SK-N-SH (cell line): ENCODE measurements at regions of chr22 and their contacts with region 1.

Region 1: DNA sequence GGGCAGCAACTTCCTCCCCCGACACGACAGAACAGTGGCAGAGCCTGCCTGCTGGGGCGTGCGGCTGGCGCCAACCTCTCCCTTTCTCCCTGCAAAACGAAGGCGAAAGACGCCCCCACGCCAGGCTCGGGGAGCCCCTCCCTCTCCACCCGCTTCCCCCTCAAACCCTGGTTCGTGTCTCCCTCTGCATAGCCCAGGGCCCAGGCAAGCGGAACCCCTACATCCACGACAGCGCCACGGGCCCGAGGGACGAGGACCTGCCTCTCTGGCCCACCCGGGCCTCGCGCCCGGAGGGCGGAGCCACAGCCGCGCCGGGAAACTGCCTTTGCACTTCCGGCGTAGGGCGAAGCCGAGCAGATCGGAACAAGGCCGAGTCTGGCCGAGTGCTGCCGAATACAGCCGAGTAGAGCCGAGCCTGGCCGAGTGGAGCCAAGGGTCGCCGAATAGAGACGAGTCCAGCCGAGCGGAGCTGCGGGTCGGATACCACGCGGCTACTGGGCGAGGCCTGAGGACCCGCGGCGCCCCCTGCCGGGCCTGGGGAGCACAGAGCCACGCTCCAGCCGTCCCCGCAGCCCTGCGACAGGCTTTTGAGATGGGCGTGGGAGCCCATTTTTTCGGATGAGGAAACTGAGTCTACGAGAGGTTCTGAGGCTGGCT is 11.2 kb upstream of the C1QTNF6 start:
- DNase-seq: peak; percentile 97
- H3K4me3 ChIP-seq: peak overlapping the region; percentile 72 to 76
- H3K27ac ChIP-seq: peak overlapping the region; percentile 73 to 96
- H3K4me1 ChIP-seq: peaks cover 19 to 28% of the 10 kb centered on the region in 2 experiments
- H3K27me3 ChIP-seq: no peaks in the 10 kb centered on the region
- CTCF ChIP-seq: peak; percentile 82
- EP300 ChIP-seq: no peak
- RAD21 ChIP-seq: peak; percentile 76

Region 2: DNA sequence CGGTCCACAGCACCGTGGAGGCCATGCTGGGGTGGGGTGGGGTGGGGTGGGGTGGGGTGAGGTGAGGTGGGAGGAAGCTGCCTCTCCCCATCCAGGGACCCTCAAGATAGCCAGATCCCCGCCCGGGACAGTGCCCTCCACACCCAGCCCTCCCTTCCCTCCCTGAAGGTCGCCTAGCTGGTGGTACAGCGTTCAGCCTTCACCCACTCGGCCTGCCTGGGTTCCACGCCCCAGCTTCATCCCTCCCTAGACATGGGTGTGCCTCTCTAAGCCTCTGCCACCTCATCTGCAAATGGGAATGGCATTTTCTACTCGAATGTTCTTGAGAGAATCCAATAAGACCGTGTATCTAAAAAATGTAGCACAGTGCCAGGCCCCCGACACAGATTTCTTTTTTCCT is 129.9 kb before region 1 on chr22:
- CTCF ChIA-PET with region 1: interaction called, 13 read pairs
- POLR2A ChIA-PET with region 1: no interaction called
- DNase-seq: no peak
- H3K4me3 ChIP-seq: no peak overlapping the region
- H3K27ac ChIP-seq: no peak overlapping the region
- H3K4me1 ChIP-seq: no peaks in the 10 kb centered on the region; a peak in 1 of 4 replicates
- H3K27me3 ChIP-seq: peaks cover 23% of the 10 kb centered on the region; the same call in 1 of the 2 replicates
- CTCF ChIP-seq: no peak
- EP300 ChIP-seq: no peak
- RAD21 ChIP-seq: no peak

Region 3: GRCh38 chr22:37145180-37146050 is 53.8 kb before region 1 on chr22:
- CTCF ChIA-PET with region 1: interaction called, 10 read pairs
- POLR2A ChIA-PET with region 1: no interaction called
- DNase-seq: no peak
- H3K4me3 ChIP-seq: no peak overlapping the region
- H3K27ac ChIP-seq: no peak overlapping the region
- H3K4me1 ChIP-seq: no peaks in the 10 kb centered on the region
- H3K27me3 ChIP-seq: no peaks in the 10 kb centered on the region
- CTCF ChIP-seq: no peak
- EP300 ChIP-seq: no peak
- RAD21 ChIP-seq: no peak

Region 4: DNA sequence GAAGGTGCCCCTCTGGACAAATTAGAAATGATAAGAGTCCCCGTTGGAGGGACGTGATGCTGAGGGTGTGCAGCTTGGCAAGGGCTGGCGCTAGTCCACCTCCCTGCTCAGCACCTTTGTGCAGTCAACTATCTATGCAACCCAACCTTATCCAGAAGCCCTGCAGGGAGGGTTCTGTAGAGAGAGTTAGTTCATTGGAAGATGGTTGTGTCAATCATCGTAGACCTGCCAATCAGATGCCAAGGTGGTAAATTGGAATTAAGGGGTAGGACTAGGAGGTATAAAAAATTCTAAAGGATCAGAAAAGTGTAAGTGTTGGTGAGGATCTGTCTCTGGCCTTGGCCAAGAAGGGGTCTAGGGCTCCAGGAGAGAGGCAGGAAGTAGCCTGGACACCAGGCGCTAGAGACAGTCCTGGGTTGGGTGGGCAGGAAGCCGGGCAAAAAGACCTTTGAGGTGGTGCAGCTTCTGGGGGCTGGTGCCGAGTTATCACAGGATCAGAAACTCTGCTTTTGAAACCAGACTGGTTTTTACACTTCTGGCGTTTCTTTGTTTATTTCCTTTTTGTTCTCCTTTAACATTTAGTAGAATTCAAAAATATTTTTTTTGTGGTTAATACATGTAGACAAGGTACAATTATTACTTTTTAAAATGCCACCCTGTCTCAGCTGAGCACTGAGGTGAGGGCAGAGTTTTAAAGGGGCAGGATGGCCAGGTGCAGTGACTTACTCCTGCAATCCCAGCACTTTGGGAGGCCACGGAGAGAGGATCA is 12.8 kb before region 1 on chr22:
- CTCF ChIA-PET with region 1: interaction called, 190 read pairs
- POLR2A ChIA-PET with region 1: interaction called, 4 read pairs
- DNase-seq: peak; percentile 85
- H3K4me3 ChIP-seq: peak overlapping the region; percentile 55 to 74
- H3K27ac ChIP-seq: peak overlapping the region; percentile 90 to 91
- H3K4me1 ChIP-seq: peaks cover 33 to 38% of the 10 kb centered on the region in 2 experiments
- H3K27me3 ChIP-seq: no peaks in the 10 kb centered on the region
- CTCF ChIP-seq: no peak
- EP300 ChIP-seq: no peak
- RAD21 ChIP-seq: no peak

Region 5: DNA sequence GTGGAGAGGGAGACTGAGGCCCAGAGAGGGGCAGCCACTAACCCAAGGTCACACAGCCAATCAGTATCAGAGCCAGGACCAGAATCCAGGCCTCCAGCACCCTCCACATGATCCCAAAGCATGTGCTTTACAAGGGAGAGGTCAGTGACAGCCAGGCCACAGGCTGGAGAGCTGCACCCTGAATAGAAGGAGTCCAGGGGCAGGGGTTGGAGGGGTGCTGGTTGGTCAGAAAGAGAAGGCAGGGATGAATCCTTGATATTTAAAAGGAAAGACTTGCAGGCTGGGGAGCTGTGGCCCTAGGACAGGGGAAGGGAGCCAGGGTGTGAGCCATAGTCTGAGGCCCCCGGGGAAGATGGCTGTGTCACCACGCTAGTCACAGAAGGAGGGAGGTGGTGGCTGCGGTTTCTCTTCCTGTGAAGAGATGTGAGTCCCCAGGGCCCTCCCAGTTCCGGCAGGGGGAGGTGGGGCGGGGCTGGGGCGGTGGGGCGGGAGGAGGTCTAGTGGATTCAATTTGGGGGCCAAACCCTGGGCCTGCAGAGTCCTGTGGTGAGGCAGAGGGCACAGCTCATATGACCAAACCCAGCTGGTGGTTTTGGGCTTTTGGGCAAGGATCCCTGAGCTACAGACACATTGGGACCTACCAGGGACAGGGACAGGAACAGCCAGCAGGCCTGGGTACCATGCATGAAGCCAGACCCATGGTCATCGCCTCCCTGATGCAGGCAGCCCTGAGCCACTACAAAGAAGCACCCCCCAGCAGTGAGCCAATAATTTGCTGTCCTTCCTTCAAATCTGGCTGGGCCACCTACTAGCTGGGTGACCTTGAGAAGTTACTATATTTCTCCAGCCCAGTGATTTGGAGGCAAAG is 30.8 kb after region 1 on chr22:
- CTCF ChIA-PET with region 1: interaction called, 10 read pairs
- POLR2A ChIA-PET with region 1: no interaction called
- DNase-seq: no peak
- H3K4me3 ChIP-seq: no peak overlapping the region
- H3K27ac ChIP-seq: peak overlapping the region in 1 of 2 experiments; percentile 83; a peak in 2 of 4 replicates
- H3K4me1 ChIP-seq: peaks cover 15 to 22% of the 10 kb centered on the region in 2 experiments; a peak in 3 of 4 replicates
- H3K27me3 ChIP-seq: no peaks in the 10 kb centered on the region
- CTCF ChIP-seq: no peak
- EP300 ChIP-seq: no peak
- RAD21 ChIP-seq: no peak

Region 6: GRCh38 chr22:37260901-37261336 is 61.7 kb after region 1 on chr22:
- CTCF ChIA-PET with region 1: interaction called, 28 read pairs
- POLR2A ChIA-PET with region 1: no interaction called
- DNase-seq: peak; percentile 84
- H3K4me3 ChIP-seq: peak overlapping the region in 1 of 2 experiments; percentile 16; a peak in 2 of 4 replicates
- H3K27ac ChIP-seq: no peak overlapping the region
- H3K4me1 ChIP-seq: peaks cover 2 to 3% of the 10 kb centered on the region in 2 experiments; a peak in 1 of 4 replicates
- H3K27me3 ChIP-seq: no peaks in the 10 kb centered on the region
- CTCF ChIP-seq: peak; percentile 91
- EP300 ChIP-seq: no peak
- RAD21 ChIP-seq: peak; percentile 68

Region 7: GRCh38 chr22:37370306-37370979 is 171.2 kb after region 1 on chr22:
- CTCF ChIA-PET with region 1: no interaction called
- POLR2A ChIA-PET with region 1: no interaction called
- DNase-seq: no peak
- H3K4me3 ChIP-seq: no peak overlapping the region
- H3K27ac ChIP-seq: no peak overlapping the region
- H3K4me1 ChIP-seq: peaks cover 0 to 18% of the 10 kb centered on the region in 2 experiments; a peak in 1 of 4 replicates
- H3K27me3 ChIP-seq: no peaks in the 10 kb centered on the region
- CTCF ChIP-seq: no peak
- EP300 ChIP-seq: no peak
- RAD21 ChIP-seq: no peak

Region 8: GRCh38 chr22:37777122-37777687 is 578.0 kb after region 1 on chr22:
- CTCF ChIA-PET with region 1: no interaction called
- POLR2A ChIA-PET with region 1: no interaction called
- DNase-seq: no peak
- H3K4me3 ChIP-seq: no peak overlapping the region
- H3K27ac ChIP-seq: no peak overlapping the region
- H3K4me1 ChIP-seq: no peaks in the 10 kb centered on the region; a peak in 1 of 4 replicates
- H3K27me3 ChIP-seq: no peaks in the 10 kb centered on the region
- CTCF ChIP-seq: no peak
- EP300 ChIP-seq: no peak
- RAD21 ChIP-seq: no peak